A673 (cell line): ENCODE measurements at regions of chr12 and their contacts with region 1.

Region 1: GRCh38 chr12:113980537-113981337 is 14.6 kb upstream of the RBM19 start:
- DNase-seq: peak; percentile 75
- H3K4me3 ChIP-seq: no peak overlapping the region
- H3K27ac ChIP-seq: no peak overlapping the region
- H3K4me1 ChIP-seq: no peaks in the 10 kb centered on the region
- H3K27me3 ChIP-seq: no peaks in the 10 kb centered on the region
- CTCF ChIP-seq: peak; percentile 92

Region 2: DNA sequence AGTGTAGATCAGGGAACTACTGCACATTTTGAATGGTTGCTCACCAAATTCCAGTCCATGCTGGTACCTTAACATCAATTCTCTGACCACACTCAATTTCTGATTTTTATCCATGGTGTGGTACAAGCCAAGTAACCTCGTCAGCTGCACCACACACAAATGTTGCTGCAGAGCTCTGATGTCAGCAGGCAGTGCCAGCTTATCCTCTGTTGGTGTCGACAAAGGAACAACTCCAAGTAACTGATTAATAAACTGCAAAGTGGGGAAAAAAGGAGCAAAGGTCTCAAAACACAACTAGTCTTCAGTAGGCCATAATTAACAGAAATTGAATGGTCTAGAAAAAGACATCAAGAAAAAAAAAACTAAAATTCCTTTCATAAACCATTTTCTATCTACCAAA is 1919.6 kb before region 1 on chr12:
- CTCF ChIA-PET with region 1: no interaction called
- POLR2A ChIA-PET with region 1: no interaction called
- intact Hi-C with region 1: no loop called
- DNase-seq: no peak
- H3K4me3 ChIP-seq: no peak overlapping the region
- H3K27ac ChIP-seq: no peak overlapping the region
- H3K4me1 ChIP-seq: no peaks in the 10 kb centered on the region
- H3K27me3 ChIP-seq: no peaks in the 10 kb centered on the region
- CTCF ChIP-seq: no peak

Region 3: GRCh38 chr12:114136631-114137030 is 155.9 kb after region 1 on chr12:
- CTCF ChIA-PET with region 1: no interaction called
- POLR2A ChIA-PET with region 1: no interaction called
- intact Hi-C with region 1: no loop called
- DNase-seq: no peak
- H3K4me3 ChIP-seq: no peak overlapping the region
- H3K27ac ChIP-seq: no peak overlapping the region
- H3K4me1 ChIP-seq: no peaks in the 10 kb centered on the region
- H3K27me3 ChIP-seq: no peaks in the 10 kb centered on the region
- CTCF ChIP-seq: no peak

Region 4: GRCh38 chr12:114476159-114476558 is 495.4 kb after region 1 on chr12:
- CTCF ChIA-PET with region 1: interaction called, 12 read pairs
- POLR2A ChIA-PET with region 1: no interaction called
- intact Hi-C with region 1: loop called (anchors 10 kb)
- DNase-seq: peak; percentile 41
- H3K4me3 ChIP-seq: no peak overlapping the region
- H3K27ac ChIP-seq: no peak overlapping the region
- H3K4me1 ChIP-seq: no peaks in the 10 kb centered on the region
- H3K27me3 ChIP-seq: peaks cover 44% of the 10 kb centered on the region
- CTCF ChIP-seq: peak; percentile 50

Region 5: DNA sequence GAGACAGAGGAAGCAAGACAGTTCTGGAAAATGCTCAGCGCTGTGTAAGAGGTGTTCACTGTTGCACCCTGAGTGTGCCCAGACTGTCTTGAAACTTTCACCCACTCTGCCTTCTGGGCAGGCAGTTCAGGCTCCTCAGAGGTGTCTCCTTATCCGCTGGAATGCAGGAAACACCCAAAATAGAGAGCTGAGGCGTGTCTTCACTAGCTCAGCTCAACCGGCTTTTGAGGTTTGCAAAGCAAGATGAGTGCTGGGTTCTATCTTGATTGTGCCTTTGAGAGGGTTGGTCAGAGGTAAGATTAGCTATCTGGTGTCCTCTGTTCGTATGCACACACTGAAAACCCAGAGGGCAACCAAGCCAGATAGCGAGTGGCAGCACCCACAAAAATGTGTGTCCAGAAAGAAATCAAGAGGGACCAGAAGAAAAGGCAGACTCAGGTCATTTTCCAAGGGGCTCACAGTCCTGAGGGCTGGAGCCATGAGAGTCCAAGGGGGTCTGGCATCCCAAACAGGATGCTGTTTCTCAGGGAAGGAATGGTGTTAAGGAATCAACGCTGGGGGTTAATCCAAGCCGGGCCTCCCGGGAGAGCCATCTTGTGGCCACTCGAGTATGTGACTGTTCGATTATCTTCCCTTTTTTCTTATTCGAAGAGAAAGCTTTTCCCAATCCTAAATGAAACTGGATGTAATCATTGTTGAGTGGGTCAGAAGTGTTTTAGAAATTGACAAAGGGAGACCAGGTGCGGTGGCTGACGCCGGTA is 656.2 kb after region 1 on chr12:
- CTCF ChIA-PET with region 1: interaction called, 6 read pairs
- POLR2A ChIA-PET with region 1: no interaction called
- intact Hi-C with region 1: loop called (anchors 1 kb)
- DNase-seq: peak; percentile 35
- H3K4me3 ChIP-seq: no peak overlapping the region
- H3K27ac ChIP-seq: no peak overlapping the region
- H3K4me1 ChIP-seq: no peaks in the 10 kb centered on the region
- H3K27me3 ChIP-seq: no peaks in the 10 kb centered on the region
- CTCF ChIP-seq: peak; percentile 45; the same call in 1 of the 2 replicates

Region 6: GRCh38 chr12:115752913-115753726 is 1772.4 kb after region 1 on chr12:
- CTCF ChIA-PET with region 1: no interaction called
- POLR2A ChIA-PET with region 1: no interaction called
- intact Hi-C with region 1: loop called (anchors 5 kb)
- DNase-seq: peak; percentile 62
- H3K4me3 ChIP-seq: no peak overlapping the region
- H3K27ac ChIP-seq: no peak overlapping the region
- H3K4me1 ChIP-seq: no peaks in the 10 kb centered on the region
- H3K27me3 ChIP-seq: peaks cover 41% of the 10 kb centered on the region
- CTCF ChIP-seq: peak; percentile 65